Psoas muscle (tissue), 8 donors: ENCODE measurements at regions of chr6 and their contacts with region 1.

Region 1: DNA sequence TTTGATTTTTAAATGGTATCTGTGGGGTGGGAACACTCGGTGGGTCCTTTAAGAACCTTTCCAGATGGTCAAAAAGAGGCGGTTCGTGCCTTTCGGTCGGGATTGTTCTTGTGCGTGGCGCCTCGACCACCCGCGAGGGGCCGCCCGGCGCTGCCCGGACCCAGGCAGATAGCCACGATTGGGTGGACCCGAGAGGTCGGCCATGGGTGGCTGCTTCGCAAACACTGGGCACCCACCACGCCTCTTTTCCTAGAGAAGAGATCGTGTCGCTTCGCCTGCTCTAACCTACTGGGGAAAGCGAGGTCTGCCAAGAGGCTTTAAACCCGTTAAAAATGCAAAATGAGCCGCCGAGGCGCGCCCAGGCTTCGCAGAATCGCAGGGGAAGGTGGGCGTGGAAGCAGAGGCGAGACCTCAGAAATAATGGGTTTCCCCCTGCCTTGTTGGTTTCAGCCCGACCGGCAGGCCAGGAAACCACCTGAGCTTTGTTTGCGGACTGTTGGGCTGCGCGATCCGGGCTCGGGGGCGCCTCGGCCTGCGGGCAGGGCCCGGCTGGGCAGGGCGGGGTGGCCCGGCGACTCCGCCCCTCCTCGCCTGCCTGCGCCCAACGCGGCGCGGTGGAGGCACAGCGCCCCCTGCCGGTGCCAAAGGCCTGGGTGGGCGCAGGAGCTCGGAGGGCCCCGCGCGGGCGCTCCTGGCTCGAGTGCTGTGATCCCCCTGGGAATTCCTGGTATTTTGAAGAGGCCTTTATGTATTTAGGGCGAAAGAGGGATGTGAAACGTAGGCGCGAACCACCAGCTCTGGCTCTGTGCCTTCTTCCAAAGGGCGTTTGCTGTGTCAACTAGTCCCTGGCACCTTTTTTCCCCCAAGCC is 1.6 kb downstream of the MARCKS start:
- DNase-seq: peak; percentile 89 to 94
- ATAC-seq: peak; percentile 84 to 95 (median 92)
- H3K4me3 ChIP-seq: peak overlapping the region; percentile 96
- H3K27ac ChIP-seq: peak overlapping the region; percentile 95
- H3K4me1 ChIP-seq: peaks cover 5% of the 10 kb centered on the region
- H3K27me3 ChIP-seq: no peaks in the 10 kb centered on the region
- CTCF ChIP-seq: peak; percentile 100

Region 2: DNA sequence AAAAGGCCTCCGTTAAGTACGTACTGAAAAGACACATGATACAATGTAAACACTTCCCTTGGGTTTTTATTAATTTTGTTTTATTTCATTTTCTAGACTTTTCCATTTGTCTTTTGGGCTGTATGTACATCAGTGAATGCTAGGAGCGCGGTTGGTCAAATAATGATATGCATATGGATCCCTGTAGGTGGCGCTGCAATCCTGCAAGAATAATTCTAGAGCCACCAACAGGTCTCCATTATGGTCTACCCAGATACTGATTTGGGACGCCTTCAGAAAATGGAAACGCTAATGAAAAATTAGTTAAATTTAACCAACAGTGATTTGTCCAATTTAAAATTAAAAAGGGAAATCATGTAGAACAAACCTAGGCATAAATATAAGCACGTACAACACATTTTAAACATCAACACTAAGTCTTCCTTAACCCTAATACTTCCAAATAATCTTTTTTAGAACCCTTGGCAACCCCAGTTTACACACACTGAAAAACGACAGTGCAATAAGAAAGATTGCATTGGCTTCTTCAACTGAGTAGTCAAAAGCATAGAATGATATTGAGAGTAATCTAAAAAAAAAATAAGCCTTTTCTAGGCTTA is 1078.1 kb before region 1 on chr6:
- intact Hi-C with region 1: loop called (anchors 5 kb)
- DNase-seq: peak; percentile 39 to 48
- ATAC-seq: peak; percentile 70 to 90 (median 84)
- H3K4me3 ChIP-seq: no peak overlapping the region
- H3K27ac ChIP-seq: no peak overlapping the region
- H3K4me1 ChIP-seq: no peaks in the 10 kb centered on the region
- H3K27me3 ChIP-seq: no peaks in the 10 kb centered on the region
- CTCF ChIP-seq: peak; percentile 89

Region 3: GRCh38 chr6:112879920-112880413 is 978.7 kb before region 1 on chr6:
- intact Hi-C with region 1: no loop called
- DNase-seq: peak in 1 of 2 donors; percentile 50
- ATAC-seq: no peak
- H3K4me3 ChIP-seq: no peak overlapping the region
- H3K27ac ChIP-seq: no peak overlapping the region
- H3K4me1 ChIP-seq: no peaks in the 10 kb centered on the region
- H3K27me3 ChIP-seq: no peaks in the 10 kb centered on the region
- CTCF ChIP-seq: no peak

Region 4: DNA sequence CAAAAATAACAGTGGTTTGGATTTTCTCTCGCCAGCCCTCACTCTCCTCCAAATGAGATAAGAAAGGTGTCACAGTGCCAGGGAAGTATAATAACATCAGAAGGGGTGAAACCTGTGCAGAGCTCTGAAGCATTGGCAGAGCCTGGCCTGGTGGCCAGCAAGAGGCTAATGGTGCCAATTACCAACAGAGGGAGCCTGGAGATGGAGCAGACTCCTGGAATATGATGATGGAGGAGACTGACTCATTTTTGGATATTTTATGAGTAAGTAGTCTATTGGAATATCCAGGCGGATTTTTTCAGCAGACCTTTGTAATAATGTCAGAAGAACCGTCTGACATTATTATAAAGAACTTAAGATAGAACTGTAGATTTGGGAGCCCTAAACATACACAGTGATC is 444.2 kb before region 1 on chr6:
- intact Hi-C with region 1: loop called in 1 of 2 experiments (anchors 10 kb)
- DNase-seq: no peak
- ATAC-seq: peak in 2 of 4 donors; percentile 44 to 60
- H3K4me3 ChIP-seq: no peak overlapping the region
- H3K27ac ChIP-seq: no peak overlapping the region
- H3K4me1 ChIP-seq: peaks cover 3% of the 10 kb centered on the region
- H3K27me3 ChIP-seq: no peaks in the 10 kb centered on the region
- CTCF ChIP-seq: peak; percentile 40

Region 5: DNA sequence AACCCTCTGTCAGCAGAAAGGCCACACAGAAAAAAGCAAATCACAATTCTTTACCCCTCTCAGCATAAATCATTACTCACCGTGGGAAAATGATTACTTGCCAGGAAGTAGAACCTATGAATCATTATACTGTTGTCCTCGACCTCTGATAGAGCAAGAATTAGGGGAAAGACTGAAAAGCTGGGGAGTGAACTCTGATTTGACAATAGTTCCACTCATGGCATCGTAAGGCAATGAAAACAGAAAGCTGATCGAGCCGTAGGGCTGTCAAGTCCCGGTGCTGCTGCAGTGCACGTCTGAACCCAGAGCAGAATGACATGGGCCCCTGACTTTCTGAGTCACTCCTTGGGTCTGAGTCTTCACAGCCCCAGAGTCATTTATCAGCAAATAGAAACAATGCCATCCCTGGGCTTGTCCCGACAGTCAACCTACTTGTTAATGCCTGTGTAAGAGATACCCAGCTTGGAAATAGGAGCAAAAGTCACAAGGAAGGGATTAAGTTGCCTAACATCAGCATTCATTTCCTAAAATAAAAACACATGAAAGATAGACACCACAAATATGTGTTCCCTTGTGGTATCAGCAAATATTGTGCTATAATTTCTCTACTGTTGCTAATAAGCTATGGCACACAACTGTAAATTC is 226.4 kb before region 1 on chr6:
- intact Hi-C with region 1: loop called (anchors 1 to 5 kb)
- DNase-seq: peak; percentile 40 to 79
- ATAC-seq: peak; percentile 93 to 96 (median 94)
- H3K4me3 ChIP-seq: peak overlapping the region; percentile 69
- H3K27ac ChIP-seq: peak overlapping the region; percentile 91
- H3K4me1 ChIP-seq: peaks cover 41% of the 10 kb centered on the region
- H3K27me3 ChIP-seq: no peaks in the 10 kb centered on the region
- CTCF ChIP-seq: no peak

Region 6: DNA sequence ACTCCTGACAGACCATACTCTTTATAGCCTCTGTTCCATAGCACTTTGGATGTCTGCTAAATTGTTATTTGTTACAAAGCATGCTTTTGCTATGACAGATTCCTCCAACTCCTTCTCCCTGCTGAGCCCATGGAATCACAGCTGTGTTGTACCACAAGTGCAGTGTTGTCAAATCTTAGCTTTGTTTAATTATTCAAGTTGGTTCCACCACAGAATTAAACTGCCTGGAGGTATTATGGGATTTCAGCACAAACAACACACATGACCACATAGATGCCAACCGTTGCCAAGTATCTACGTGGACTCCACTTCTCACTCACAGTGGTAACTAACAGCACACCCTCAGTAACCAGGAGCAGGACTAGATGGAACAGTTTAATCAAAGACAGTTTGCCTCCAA is 34.3 kb before region 1 on chr6:
- intact Hi-C with region 1: loop called in 1 of 2 experiments (anchors 5 kb)
- DNase-seq: no peak
- ATAC-seq: no peak
- H3K4me3 ChIP-seq: no peak overlapping the region
- H3K27ac ChIP-seq: no peak overlapping the region
- H3K4me1 ChIP-seq: peaks cover 21% of the 10 kb centered on the region
- H3K27me3 ChIP-seq: no peaks in the 10 kb centered on the region
- CTCF ChIP-seq: no peak